AG04449 (cell line): ENCODE measurements at regions of chr15 and their contacts with region 1.

Region 1: DNA sequence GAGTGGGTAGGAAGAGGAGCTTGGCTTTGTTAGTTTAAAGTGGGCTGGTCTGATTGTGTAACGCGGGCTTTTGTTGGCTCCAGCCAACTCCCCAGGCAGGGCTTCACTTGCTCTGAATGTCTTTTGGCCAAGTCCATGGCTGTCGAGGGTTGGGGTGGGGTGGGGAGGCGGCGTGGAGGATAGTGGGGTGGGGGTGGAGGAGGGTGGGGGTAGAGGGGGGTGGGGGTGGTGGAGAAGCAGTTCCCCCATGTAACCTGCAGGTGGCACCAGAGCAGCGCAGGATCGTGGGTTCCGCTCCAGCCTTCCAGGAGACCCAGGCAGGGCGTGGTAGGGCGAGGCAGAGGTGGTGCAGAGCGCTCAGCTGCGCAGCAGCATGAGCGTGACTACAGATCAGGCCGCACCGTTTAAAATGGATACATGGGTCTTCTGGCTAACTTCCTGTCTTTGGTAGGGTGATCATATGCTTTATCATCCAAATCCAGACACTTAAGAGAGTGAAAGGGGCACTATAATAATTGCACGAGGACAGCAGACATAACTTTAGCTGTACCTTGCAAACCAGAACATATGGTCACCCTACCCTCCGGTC is 28.3 kb downstream of the GOLGA6A start:
- DNase-seq: no peak
- H3K4me3 ChIP-seq: no peak overlapping the region
- CTCF ChIP-seq: peak; percentile 79

Region 2: GRCh38 chr15:73964736-73965093 is 89.3 kb before region 1 on chr15:
- CTCF ChIA-PET with region 1: interaction called, 544 read pairs
- POLR2A ChIA-PET with region 1: no interaction called
- DNase-seq: no peak
- H3K4me3 ChIP-seq: no peak overlapping the region
- CTCF ChIP-seq: peak; percentile 99

Region 3: DNA sequence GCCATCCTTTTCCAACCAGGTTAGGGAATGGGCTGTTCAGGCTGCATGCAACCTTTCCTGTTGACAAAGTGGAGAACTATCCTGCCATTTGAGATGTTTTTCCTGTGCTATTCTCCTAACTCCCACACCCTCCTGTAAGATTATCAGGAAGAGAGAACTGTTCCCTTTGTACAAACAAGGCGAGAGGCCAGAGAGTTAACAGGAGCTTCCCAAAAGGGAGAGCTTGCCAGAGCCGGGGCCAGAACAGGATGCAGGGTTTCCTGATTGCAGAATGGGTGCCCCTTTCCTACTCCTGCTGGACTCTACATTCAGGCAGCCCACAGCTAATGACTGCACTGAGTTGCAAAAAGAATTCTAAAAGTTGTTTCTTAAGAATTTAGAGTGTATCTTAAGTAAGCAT is 42.4 kb before region 1 on chr15:
- CTCF ChIA-PET with region 1: interaction called, 15 read pairs
- POLR2A ChIA-PET with region 1: no interaction called
- DNase-seq: no peak
- H3K4me3 ChIP-seq: no peak overlapping the region
- CTCF ChIP-seq: no peak

Region 4: DNA sequence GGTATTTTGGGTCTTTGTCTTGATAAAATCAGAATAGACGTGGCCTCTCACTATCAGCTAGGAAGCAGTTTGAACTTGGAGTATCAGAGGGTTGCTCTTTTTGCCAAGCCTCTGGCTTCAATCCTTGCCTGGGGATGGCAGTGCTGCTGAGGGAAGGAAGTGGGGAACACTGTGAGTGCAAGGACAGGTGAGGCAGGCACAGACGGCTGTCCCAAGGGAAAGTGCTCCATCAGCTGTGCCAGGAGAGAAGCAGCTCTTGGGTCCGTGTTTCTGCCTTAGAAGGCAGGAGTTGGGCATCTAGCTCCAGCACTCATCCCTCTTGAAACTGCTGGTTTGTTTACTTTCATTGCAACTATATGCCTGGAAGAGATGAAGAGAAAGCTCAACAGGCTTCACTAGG is 26.3 kb before region 1 on chr15:
- CTCF ChIA-PET with region 1: no interaction called
- POLR2A ChIA-PET with region 1: no interaction called
- DNase-seq: no peak
- H3K4me3 ChIP-seq: no peak overlapping the region
- CTCF ChIP-seq: no peak

Region 5: GRCh38 chr15:74127260-74127953 is 73.4 kb after region 1 on chr15:
- CTCF ChIA-PET with region 1: interaction called, 13 read pairs
- POLR2A ChIA-PET with region 1: no interaction called
- DNase-seq: peak; percentile 5
- H3K4me3 ChIP-seq: peak overlapping the region; percentile 51
- CTCF ChIP-seq: peak; percentile 100